ENCODE measurements at regions of chr2 and their contacts with region 1.

Region 1: DNA sequence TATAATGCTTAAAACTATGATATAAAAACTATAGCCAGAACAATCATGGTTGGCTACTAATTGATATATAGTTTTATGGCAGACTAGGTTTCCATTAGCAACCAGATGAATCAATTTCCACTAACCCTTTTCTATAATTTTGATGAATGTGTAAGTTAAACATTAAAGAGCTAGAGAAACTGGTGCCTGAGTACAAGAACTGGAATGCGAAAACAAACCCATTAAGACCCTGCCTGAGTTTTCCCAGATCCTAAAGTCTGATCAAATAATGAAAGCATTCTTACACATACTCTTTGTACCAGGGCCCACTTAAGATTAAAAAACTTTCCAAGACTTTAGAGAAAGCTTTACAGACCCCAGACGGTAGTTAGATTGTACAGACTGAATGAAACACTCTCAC is 21.3 kb downstream of the MRPL19 start:
- DNase-seq: no peak
- ATAC-seq: no peak
- H3K4me3 ChIP-seq: no peak overlapping the region
- H3K27ac ChIP-seq: no peak overlapping the region
- H3K4me1 ChIP-seq: no peaks in the 10 kb centered on the region
- H3K27me3 ChIP-seq: no peaks in the 10 kb centered on the region
- CTCF ChIP-seq: no peak

Region 2: DNA sequence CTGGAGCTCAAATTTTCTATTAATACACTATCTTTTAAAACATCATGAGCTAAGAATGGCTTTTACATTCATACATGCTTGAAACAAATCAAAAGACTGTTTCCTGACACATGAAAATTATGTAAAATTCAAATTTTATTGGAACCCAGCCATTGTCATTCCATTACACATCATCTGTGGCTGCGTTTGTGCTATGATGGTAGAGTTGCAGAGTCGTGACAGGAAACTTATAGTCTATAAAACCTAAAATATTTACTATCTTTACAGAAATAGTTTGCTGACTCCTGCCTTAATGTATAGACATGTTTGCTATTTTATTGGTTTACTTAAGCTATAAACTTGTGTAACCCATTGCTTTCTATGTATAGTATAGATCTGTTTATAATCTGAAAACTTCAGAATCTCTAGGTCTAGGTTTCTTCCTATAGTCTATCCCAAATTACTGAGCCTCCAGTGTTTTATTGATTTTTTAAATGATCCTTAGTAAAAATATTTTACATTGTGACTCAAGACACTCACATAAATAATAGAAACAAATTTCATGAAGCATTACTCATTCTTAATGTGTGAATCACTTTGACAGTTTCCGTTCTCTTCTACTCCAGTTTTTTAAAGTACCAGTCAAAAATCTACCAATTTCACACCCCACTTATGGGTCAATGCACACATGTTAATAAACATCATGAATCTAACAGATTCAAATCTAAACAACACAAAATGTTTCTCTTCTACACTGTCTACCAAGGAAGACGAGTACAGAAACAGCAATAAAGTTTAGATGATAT is 47.7 kb before region 1 on chr2:
- intact Hi-C with region 1: no loop called
- DNase-seq: no peak
- ATAC-seq: no peak
- H3K4me3 ChIP-seq: no peak overlapping the region
- H3K27ac ChIP-seq: no peak overlapping the region
- H3K4me1 ChIP-seq: no peaks in the 10 kb centered on the region
- H3K27me3 ChIP-seq: no peaks in the 10 kb centered on the region
- CTCF ChIP-seq: no peak

Region 3: DNA sequence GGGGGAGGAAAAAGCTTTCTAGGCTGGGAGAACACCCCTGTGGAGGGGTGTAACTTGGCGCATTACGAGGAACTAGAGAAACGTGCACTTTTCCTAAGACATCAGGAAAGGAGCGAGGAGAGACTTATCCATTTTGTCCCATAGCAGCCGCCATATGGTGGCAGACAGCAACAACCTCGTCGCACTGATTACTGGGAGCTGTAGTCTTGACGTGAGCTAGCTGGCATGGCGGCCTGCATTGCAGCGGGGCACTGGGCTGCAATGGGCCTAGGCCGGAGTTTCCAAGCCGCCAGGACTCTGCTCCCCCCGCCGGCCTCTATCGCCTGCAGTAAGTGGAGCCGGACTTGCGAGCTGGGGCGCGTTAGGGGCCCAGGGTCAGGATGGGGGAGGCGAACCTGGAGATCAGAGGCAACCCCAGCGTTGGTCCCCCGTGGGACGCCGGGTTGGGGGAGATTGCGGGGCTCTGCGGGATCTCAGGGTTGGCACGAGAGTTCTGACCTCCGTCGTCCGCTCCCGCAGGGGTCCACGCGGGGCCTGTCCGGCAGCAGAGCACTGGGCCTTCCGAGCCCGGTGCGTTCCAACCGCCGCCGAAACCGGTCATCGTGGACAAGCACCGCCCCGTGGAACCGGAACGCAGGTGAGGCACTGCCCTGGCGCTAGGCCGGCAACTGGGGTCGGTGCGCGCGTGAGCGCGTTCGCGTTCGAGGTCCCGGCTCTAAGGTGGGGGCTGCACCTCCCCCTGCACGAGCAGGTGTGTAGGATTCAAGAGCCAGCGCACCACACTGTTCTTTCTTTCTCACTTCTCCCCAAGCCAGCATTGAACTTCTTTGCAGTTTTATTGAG is 21.1 kb before region 1 on chr2 and contains the start of gene MRPL19:
- intact Hi-C with region 1: loop called in 1 of 2 experiments (anchors 2 kb)
- DNase-seq: peak; percentile 81 to 87
- ATAC-seq: peak; percentile 88 to 94 (median 90)
- H3K4me3 ChIP-seq: peak within 1 kb of the TSS; percentile 95
- H3K27ac ChIP-seq: peak within 1 kb of the TSS; percentile 83
- H3K4me1 ChIP-seq: peaks cover 38% of the 10 kb centered on the region
- H3K27me3 ChIP-seq: no peaks in the 10 kb centered on the region
- CTCF ChIP-seq: no peak
- total RNA-seq, gene MRPL19: 58.8 to 78.2 (median 71.9) TPM

Measured in psoas muscle (tissue), 8 donors.